Dorsolateral prefrontal cortex (tissue), 120 donors: ENCODE measurements at regions of chr6 and their contacts with region 1.

Region 1: DNA sequence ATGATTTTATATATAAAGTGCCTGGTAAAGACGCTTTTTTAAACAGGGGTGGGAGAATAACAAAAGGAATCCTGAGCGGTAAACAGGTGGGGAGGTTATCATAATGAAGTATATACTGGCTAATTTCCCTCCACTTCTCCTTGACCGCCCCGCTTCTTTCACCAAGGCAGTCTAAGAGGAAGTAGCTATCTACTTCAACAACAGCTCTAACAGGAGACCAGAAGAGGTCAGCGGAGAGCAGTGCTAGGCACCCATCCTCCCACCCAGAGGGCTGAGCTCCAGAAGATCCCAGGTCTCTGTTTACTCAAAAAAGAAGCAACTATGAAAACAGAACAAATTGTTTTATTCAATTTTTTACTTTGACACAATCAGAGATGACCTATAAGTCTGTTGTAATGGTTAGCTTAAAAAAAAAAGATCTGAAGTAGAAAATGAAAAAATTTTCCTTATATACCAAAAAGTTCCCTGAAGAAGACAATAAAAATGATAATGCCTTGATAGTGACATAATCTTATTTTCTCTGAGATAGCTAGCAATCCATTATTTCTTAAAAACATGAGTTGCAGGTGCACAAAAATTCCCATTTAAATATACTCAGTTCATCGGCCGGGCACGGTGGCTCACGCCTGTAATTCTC is 141.1 kb downstream of the PDSS2 start:
- DNase-seq: peak in 6 of 10 donors; percentile 13 to 49 (median 38)
- H3K4me3 ChIP-seq: no peak overlapping the region
- H3K27ac ChIP-seq: no peak overlapping the region
- H3K27me3 ChIP-seq: no peaks in the 10 kb centered on the region
- CTCF ChIP-seq: peak in 53 of 56 donors; percentile 21 to 71 (median 53)

Region 2: GRCh38 chr6:107361753-107362604 is 43.8 kb after region 1 on chr6:
- intact Hi-C with region 1: no loop called
- DNase-seq: no peak
- H3K4me3 ChIP-seq: no peak overlapping the region
- H3K27ac ChIP-seq: no peak overlapping the region
- H3K27me3 ChIP-seq: no peaks in the 10 kb centered on the region
- CTCF ChIP-seq: no peak

Region 3: GRCh38 chr6:107459283-107460082 is 141.3 kb after region 1 on chr6 and contains the start of gene PDSS2:
- intact Hi-C with region 1: loop called in 1 of 2 experiments (anchors 10 kb)
- DNase-seq: peak; percentile 95 to 99 (median 98)
- H3K4me3 ChIP-seq: peak within 1 kb of the TSS; percentile 55 to 98 (median 88)
- H3K27ac ChIP-seq: peak within 1 kb of the TSS; percentile 40 to 98 (median 91)
- H3K27me3 ChIP-seq: no peaks in the 10 kb centered on the region
- CTCF ChIP-seq: peak in 54 of 56 donors; percentile 24 to 69 (median 48)
- total RNA-seq, gene PDSS2: 6.3 to 14.5 (median 9.7) TPM

Region 4: DNA sequence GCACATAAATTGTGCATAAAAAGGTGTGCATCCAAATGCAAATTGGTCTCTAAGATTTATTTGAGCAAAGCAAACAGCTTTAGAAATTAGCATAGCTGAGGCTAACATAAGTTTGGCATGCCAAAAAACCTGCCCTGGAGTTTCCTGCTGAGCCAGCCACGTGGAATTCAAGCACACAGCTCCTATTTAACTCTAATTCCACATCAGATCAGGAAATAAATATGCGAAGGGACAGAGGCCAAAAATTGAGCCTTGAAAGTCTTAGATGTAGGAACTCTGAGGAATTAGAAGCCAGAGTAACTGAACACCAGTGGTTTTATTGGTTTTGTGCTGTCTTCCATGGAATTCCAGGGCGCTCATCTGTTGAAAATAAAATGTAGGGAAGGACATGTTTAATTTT is 191.3 kb after region 1 on chr6:
- intact Hi-C with region 1: no loop called
- DNase-seq: no peak
- H3K4me3 ChIP-seq: no peak overlapping the region
- H3K27ac ChIP-seq: no peak overlapping the region
- H3K27me3 ChIP-seq: no peaks in the 10 kb centered on the region
- CTCF ChIP-seq: no peak

Region 5: DNA sequence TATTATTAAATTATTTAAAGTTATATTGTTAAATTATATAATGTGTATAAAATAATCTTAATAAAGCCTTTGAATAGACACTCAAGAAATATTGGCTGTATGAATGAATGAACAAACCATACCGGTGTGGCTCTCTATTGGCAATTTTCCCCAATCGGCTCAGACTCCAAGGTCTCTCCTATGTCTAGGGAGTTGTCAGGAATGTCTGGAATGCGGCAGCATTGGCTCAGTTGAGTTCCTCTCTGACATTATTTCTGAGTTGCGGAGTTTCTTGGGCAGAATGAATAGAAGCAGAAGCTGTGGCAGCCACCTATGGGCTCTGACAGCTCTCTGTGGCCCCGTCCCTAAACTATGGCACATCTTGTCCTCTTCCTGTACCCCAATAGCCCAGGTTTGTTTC is 282.7 kb after region 1 on chr6:
- intact Hi-C with region 1: loop called in 1 of 2 experiments (anchors 10 kb)
- DNase-seq: no peak
- H3K4me3 ChIP-seq: no peak overlapping the region
- H3K27ac ChIP-seq: no peak overlapping the region
- H3K27me3 ChIP-seq: no peaks in the 10 kb centered on the region
- CTCF ChIP-seq: no peak

Region 6: DNA sequence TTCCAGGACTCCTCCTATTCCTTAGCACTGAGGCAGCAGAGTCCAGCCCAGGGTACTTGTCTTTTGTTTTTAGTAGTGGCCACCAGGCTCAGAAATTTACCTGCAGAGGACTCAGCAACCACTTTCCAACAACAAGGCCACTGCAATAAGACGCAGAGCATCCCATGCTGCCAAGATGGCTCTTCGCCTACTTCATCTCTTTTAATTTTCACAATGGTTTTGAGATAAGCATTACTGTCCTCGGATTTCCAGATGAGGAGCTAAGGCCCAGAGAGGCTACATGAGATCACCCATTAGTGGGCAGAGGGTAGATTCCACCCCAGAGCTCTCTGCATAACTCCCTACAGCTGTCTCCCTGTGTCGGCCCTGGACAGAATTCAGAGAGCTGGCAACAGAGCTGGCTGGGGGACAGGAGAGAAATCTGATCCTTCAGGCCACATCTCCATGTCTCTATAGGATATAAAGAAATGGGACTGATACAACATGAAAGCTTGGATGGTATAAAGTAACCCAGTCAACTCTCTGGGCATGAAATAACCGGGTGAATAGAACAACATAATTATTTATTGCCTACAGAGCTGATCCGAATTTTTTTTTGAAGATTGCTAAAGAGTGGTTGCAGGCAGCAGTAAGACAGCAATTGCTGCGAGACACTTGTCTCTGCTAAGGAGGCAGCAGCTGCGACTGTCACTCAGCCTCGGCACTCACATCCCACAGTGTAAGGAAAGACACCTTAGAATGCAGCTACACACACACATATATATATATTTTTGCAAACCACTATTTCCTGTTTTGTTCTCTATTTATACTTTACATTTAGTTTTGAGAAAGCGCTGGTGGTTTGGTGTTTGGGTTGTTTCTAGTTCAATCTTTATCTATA is 468.7 kb after region 1 on chr6:
- intact Hi-C with region 1: no loop called
- DNase-seq: no peak
- H3K4me3 ChIP-seq: no peak overlapping the region
- H3K27ac ChIP-seq: no peak overlapping the region
- H3K27me3 ChIP-seq: no peaks in the 10 kb centered on the region
- CTCF ChIP-seq: no peak